ENCODE measurements at regions of chr12 and their contacts with region 1.

Region 1: GRCh38 chr12:2944401-2945047 is 14.7 kb upstream of the TEAD4 start:
- DNase-seq: peak in 32 of 35 experiments; percentile 4 to 61 (median 34)
- ATAC-seq: peak; percentile 51 to 68 (median 56)
- H3K4me3 ChIP-seq: no peak overlapping the region
- H3K4me3 Mint-ChIP-seq: no peak overlapping the region
- H3K27ac ChIP-seq: no peak overlapping the region
- H3K27ac Mint-ChIP-seq: no peak overlapping the region
- H3K4me1 ChIP-seq: peaks cover 0 to 6% of the 10 kb centered on the region in 2 experiments
- H3K4me1 Mint-ChIP-seq: peaks cover 3 to 5% (median 4%) of the 10 kb centered on the region in 3 donors
- H3K27me3 ChIP-seq: no peaks in the 10 kb centered on the region
- H3K27me3 Mint-ChIP-seq: peaks cover 0 to 10% of the 10 kb centered on the region in 2 donors

Region 2: DNA sequence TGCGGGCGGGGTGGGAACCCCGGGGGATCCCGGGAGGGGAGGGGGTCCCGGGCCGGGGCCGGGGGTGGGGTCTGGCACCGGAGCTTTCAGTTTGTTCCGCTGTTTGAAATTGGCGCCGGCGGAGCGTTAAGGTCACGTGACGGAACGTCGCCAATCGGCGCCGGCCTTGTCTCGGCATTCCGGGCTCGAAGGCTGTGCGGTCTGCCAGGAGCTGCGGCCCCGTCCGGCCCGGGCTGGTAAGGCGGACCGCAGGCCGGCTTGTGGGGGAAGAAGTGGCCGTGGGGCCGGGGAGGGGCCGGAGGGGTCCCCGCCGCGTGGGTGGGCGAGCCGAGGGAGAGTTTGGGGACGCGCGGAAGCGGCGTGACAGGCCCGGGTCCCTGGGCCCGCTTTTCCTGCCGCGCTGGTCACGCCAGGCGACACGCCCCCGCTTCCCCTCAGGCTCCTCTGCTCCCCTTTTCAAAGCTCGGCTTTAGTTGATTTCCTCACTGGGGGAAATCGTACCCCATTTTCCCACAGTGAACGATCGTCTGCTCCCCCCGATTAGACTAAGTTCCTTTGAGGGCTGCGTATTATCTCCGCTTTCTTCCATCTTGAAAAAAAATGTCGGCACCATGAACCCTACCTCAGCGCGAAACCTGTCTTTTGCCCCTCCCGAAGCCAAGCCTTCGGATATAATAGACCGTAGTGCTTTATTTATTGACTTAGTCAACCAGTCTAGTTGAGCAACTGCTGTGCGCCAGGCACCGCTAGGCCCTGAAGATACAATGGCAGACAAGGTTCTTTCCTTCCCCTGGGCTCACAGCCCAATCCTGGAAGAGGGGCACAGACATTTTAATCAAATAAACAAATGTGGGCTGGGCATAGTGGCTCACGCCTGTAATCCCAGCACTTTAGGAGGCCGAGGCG is 67.2 kb before region 1 on chr12 and contains the starts of genes FOXM1 and RHNO1:
- CTCF ChIA-PET with region 1: no interaction called
- POLR2A ChIA-PET with region 1: interaction called in 1 of 2 experiments, 15 read pairs
- DNase-seq: peak; percentile 62 to 91 (median 82)
- ATAC-seq: peak; percentile 84 to 88 (median 86)
- H3K4me3 ChIP-seq: peak within 1 kb of the TSS; percentile 75 to 94
- H3K4me3 Mint-ChIP-seq: peak within 1 kb of the TSS; percentile 92 to 98 (median 98)
- H3K27ac ChIP-seq: peak within 1 kb of the TSS; percentile 90
- H3K27ac Mint-ChIP-seq: peak within 1 kb of the TSS; percentile 99
- H3K4me1 ChIP-seq: peaks cover 5 to 39% of the 10 kb centered on the region in 2 experiments
- H3K4me1 Mint-ChIP-seq: peaks cover 31 to 39% (median 36%) of the 10 kb centered on the region in 3 donors
- H3K27me3 ChIP-seq: no peaks in the 10 kb centered on the region
- H3K27me3 Mint-ChIP-seq: no peaks in the 10 kb centered on the region
- total RNA-seq, gene FOXM1: 0.82 to 1.6 (median 1.1) TPM
- total RNA-seq, gene RHNO1: 19.6 to 28.3 (median 25.7) TPM